Left cardiac atrium (tissue), 4 donors: ENCODE measurements at regions of chr3 and their contacts with region 1.

Region 1: DNA sequence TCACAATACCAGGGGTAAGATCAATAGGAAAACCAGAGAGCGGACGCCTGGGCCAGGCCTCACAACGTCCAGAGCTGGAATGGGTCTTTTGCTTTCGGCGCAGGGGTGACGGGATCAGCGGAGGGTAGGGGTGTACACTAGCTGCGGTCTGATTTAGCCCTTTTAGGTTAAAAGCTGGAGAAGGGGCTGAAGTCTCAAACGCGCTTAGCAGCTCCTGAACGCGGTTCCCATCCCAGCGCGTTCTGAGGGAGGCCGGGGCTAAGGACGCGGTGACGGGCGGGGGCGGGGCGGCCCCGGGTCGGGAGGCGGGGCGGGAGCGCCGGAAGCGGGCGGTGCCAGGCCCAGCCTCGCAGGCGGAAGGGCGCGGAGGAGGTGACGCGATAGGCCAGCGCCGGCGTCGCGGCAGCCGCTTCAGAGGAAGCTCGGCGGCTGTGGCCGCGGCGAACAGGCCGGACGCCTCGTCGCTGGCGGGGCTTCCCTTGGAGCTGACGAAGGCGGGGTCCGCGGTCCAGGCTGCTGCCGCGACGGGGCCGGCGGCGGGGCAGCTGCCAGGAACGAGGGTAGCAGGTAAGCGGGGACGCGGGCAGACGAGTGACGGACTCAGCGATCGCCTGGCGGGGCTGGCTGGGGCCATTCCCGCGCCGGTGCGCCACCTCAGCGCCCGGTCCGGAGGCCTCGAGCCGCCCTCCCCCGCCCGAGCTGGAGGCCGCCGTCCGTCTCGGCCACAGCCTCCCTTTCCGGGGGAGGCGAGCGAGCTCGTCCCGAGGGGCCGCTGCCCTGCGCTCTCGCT is at the start of gene SENP5:
- DNase-seq: peak; percentile 93
- ATAC-seq: peak; percentile 99
- total RNA-seq, gene SENP5: 17.5 to 26.9 TPM

Region 2: DNA sequence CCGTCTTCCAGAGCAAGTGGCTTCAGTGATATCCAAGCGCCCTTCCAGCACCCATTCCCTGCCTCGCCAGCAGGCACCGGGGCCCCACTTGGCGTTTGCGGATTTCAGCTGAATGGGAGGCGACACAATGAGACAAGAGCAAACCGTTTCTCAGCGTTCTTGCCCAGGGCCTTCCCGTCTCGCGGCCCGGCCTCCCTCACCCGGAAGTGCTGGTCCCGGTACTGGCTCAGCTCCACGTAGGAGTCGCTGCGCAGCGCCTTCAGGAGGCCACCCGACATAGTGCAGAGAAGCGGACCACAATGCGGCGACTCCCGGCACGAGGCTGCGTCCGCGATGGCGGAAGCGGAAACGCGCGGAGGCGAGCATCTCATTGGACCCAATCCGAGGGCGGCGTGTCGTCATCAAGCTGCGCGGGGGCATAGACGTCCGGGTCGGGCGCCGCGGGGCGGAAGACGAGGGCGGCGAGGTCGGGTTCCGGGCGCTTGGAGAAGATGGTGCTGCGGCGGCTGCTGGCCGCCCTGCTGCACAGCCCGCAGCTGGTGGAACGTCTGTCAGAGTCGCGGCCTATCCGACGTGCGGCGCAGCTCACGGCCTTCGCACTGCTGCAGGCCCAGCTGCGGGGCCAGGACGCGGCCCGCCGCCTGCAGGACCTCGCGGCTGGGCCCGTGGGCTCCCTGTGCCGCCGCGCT is 74.7 kb after region 1 on chr3 and contains the start of gene NCBP2:
- intact Hi-C with region 1: loop called in 1 of 2 experiments (anchors 2 kb)
- DNase-seq: peak; percentile 99
- ATAC-seq: peak; percentile 96
- total RNA-seq, gene NCBP2: 33.6 to 41.0 TPM